Colonic mucosa (tissue), 4 donors: ENCODE measurements at regions of chr17 and their contacts with region 1.

Region 1: DNA sequence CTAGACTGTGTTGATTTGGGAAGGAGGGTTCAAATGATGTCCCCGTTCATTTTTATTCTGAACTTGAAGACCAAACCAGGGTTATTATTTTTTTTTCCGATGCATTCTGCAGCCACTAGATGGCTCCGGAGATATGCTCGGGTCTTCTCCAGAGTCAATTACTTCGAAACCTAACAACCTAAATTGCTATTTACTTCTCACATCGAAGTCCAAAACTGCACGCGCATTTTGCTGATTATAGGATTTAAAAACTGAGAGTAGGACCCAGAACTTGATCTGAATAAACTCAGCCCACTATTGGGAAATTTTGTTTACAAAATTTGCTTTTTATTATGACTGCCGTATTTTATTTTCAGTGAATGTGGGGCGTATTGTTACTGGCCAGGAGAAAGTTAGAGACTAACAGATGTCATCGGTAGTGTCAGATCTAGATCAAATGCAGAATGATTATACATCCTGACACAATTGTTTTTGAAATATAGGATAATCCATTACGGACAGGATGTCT is 263.8 kb downstream of the HS3ST3A1 start:
- DNase-seq: peak; percentile 31
- H3K4me3 ChIP-seq: no peak overlapping the region
- H3K27ac ChIP-seq: no peak overlapping the region
- H3K4me1 ChIP-seq: no peaks in the 10 kb centered on the region
- H3K27me3 ChIP-seq: no peaks in the 10 kb centered on the region
- CTCF ChIP-seq: peak; percentile 69

Region 2: DNA sequence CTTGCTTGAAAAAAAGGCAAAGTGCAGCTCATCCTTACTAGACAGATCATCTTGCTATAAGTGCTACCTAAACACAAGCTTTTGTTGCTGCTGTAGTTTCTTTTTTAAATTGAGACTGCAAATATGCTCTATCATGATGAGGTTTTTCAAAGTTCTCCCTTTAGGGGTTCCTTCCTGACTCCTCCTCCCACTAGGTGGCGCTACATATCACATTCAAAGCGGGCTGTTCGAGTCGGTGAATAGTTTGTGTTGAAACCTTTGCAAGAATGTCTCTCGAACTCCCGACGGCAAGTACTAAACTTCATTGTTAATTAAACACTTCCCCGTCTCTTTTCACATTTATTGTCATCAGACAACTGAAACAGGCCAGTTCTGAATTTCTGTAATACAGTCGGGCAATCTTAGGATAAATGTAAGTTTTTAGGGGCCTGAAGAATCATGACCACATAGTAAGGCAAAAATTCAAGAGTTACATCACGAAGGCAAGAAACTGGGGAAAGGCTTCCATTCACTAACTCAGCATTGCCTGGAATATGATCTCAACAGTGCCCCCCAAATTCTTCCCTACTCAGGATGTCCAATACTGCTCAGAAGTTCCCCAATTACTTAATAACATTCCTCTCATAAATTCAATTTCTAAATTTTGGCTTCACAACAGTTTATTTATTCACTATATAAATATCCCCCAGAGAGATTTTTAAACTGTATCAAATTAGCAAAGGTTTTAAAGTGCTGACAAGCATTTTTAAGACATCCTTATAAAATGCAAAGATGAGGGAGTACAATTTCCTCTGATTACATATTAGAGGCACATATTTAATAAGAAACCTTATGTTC is 257.1 kb after region 1 on chr17:
- intact Hi-C with region 1: loop called (anchors 5 kb)
- DNase-seq: peak; percentile 83
- H3K4me3 ChIP-seq: no peak overlapping the region
- H3K27ac ChIP-seq: no peak overlapping the region
- H3K4me1 ChIP-seq: no peaks in the 10 kb centered on the region
- H3K27me3 ChIP-seq: peaks cover under 1% of the 10 kb centered on the region
- CTCF ChIP-seq: peak; percentile 85

Region 3: DNA sequence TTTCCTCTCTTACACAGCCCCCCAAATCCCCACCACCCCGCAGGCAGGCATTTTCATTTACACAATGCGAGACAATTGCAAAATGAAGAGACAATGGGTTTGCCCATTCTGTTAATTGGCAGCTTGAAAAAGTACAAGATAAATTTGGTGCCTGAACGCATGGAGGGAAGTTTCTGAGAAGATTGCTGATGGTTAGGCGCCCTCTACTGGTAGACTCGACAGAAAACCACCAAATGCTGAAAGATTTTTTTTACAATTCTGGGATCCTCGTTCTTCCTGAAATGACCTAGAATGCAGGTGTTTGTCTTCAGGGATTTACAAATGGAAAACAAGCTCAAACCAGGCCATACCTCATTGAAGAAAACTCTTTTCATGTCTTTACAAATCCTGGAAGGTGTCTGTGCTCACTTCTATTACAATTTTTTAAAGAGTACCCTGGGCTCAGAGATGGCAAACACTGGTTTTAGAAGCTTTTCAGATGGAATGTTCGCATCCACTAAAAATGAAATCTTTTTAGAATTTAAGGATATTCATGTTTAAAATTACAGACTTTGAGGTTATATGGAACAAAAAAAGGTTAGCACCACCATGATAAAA is 1588.7 kb after region 1 on chr17:
- intact Hi-C with region 1: loop called (anchors 5 kb)
- DNase-seq: peak; percentile 44
- H3K4me3 ChIP-seq: no peak overlapping the region
- H3K27ac ChIP-seq: no peak overlapping the region
- H3K4me1 ChIP-seq: no peaks in the 10 kb centered on the region
- H3K27me3 ChIP-seq: no peaks in the 10 kb centered on the region
- CTCF ChIP-seq: peak; percentile 69